Activated T-helper 1 cell treated with anti-CD3 and anti-CD28 coated beads, Interleukin-12 subunit alpha, Interleukin-12 subunit beta, Interleukin-2, Interleukin-4 antibody, amounts not matched to agents 30 ng/mL and 10 ng/mL and 1 ng/mL, durations not matched to agents 14 hours and 24 hours and 36 hours (primary cell): ENCODE measurements at regions of chr3 and their contacts with region 1.

Region 1: DNA sequence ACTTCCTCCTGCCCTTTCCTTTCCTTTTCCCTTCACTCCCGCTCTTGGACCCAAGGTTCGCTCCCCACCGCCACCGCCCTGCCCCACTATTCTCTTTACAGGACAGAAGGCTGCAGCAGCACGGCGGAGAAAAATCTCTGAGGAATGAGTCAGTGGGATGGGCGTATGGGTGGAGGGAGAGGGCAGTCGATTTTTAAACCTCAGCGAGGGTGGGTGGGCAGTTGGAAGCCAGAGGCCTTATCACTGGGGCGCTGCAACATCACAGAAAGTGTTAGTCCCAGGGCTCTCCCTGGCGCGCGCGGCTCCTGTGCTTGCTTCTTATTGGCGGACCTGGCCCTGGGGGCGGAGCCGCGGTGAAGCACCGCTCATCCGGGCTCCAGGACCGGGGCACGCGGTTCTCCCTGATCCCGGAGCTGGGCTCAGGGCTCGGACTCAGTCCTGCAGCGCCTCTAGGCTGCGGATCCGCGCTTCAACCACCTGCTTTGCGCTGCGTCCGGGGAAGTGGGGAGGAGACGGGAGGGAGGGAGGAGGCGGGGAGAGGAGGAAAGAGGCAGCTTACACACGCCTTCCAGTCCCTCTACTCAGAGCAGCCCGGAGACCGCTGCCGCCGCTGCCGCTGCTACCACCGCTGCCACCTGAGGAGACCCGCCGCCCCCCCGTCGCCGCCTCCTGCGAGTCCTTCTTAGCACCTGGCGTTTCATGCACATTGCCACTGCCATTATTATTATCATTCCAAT is at the start of gene ALCAM:
- DNase-seq: peak; percentile 80
- H3K4me3 Mint-ChIP-seq: peak within 1 kb of the TSS; percentile 90
- H3K27ac Mint-ChIP-seq: peak within 1 kb of the TSS; percentile 98
- H3K4me1 Mint-ChIP-seq: peaks cover 43% of the 10 kb centered on the region
- H3K27me3 Mint-ChIP-seq: peaks cover 22% of the 10 kb centered on the region
- total RNA-seq, gene ALCAM: 24.9 and 25.2 TPM in 2 replicates

Region 2: GRCh38 chr3:104273046-104273649 is 1093.3 kb before region 1 on chr3:
- intact Hi-C with region 1: loop called (anchors 5 kb)
- DNase-seq: no peak
- H3K4me3 Mint-ChIP-seq: no peak overlapping the region
- H3K27ac Mint-ChIP-seq: no peak overlapping the region
- H3K4me1 Mint-ChIP-seq: no peaks in the 10 kb centered on the region
- H3K27me3 Mint-ChIP-seq: no peaks in the 10 kb centered on the region

Region 3: DNA sequence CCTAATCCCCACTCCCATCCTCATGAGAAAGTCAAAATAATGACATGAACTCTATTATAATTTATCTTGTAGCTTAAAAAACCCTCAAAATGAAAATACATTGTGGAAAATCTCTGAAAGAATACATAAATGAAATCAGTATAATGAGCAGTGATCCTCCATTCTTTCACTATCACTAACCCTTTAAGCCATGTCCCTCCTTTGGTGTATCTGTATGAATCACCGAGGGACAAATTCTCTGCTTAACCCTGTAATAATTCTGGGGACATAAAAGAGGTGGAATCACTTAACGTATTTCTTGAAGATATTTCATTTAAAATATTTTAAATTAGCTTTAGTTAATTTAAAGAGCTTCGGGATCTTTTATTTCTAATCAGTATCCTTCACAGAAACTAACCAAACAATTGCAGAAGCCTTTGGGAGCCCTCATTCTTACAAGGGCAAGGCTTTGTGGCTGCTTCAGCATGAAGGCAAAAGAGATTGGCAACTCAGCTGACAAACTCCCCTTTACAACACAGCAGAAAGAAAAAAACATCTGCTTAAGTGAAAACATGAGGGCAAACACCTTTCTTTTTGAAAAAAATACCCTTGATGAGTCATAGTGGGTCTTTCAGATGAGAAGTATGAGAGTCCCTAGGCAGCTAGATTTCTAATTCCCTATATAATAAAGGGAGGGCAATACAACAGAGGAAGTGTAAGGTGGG is 43.8 kb before region 1 on chr3:
- intact Hi-C with region 1: loop called (anchors 1 kb)
- DNase-seq: no peak
- H3K4me3 Mint-ChIP-seq: no peak overlapping the region
- H3K27ac Mint-ChIP-seq: no peak overlapping the region
- H3K4me1 Mint-ChIP-seq: no peaks in the 10 kb centered on the region
- H3K27me3 Mint-ChIP-seq: peaks cover 4% of the 10 kb centered on the region

Region 4: DNA sequence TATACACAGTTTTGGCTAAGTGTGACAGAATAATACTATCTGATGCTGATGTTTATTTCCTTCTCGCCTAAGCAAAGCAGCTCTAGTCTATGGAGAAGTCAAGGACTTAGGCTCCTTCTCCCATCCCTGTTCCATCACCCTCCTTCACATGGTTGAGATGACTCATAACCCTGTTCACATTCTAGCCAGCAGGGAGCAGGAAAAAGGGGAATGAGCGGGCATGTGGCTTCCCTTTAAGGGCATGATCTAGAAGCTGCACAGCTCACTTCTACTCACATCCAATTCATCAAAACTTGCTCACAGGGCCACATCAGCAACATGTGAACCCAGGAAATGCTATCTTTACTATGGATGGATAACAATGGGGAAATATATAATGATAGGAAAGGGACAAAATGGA is 461.5 kb after region 1 on chr3:
- intact Hi-C with region 1: loop called (anchors 1 kb)
- DNase-seq: no peak
- H3K4me3 Mint-ChIP-seq: peak overlapping the region; percentile 57
- H3K27ac Mint-ChIP-seq: peak overlapping the region; percentile 96
- H3K4me1 Mint-ChIP-seq: peaks cover 88% of the 10 kb centered on the region
- H3K27me3 Mint-ChIP-seq: no peaks in the 10 kb centered on the region

Region 5: GRCh38 chr3:106232956-106233355 is 866.5 kb after region 1 on chr3:
- intact Hi-C with region 1: loop called (anchors 5 kb)
- DNase-seq: no peak
- H3K4me3 Mint-ChIP-seq: no peak overlapping the region
- H3K27ac Mint-ChIP-seq: peak overlapping the region; percentile 46
- H3K4me1 Mint-ChIP-seq: peaks cover 46% of the 10 kb centered on the region
- H3K27me3 Mint-ChIP-seq: no peaks in the 10 kb centered on the region

Region 6: DNA sequence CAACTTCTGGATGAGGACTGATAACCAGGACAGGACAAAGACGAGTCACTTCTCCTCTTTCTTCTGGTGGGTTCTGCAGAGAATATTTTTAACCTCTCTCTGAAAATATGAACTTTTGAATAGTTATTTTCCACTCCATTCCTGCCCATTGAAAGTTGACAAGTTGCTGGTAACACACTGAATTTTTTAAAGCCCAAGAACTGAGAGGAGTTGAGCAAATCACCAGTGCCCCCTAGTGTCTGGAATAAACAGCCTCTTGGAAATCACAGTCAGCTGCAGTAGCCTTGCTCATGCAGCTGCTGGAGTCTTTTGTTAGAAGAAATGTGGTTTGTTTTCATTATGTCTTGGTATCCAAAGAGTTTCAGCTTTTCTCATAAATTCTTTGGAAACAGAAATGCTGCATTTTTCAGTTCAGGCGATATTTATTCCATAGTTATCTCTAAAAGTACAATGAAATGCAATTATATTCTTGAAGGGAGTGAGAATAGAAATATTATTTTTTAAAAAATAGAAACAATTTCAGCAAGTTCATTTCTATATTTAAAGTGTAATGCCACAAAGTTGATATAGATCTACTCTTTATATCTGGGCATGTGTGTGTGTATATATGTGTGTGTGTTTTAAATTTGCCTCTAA is 1243.3 kb after region 1 on chr3:
- intact Hi-C with region 1: loop called (anchors 1 kb)
- DNase-seq: peak; percentile 50
- H3K4me3 Mint-ChIP-seq: no peak overlapping the region
- H3K27ac Mint-ChIP-seq: peak overlapping the region; percentile 66
- H3K4me1 Mint-ChIP-seq: peaks cover 30% of the 10 kb centered on the region
- H3K27me3 Mint-ChIP-seq: no peaks in the 10 kb centered on the region